ENCODE measurements at regions of chr11 and their contacts with region 1.

Region 1: GRCh38 chr11:9314291-9315036 is at the start of gene TMEM41B:
- DNase-seq: peak; percentile 98
- H3K4me3 Mint-ChIP-seq: peak within 1 kb of the TSS; percentile 99
- H3K27ac Mint-ChIP-seq: peak within 1 kb of the TSS; percentile 97
- H3K4me1 Mint-ChIP-seq: peaks cover 37% of the 10 kb centered on the region
- H3K27me3 Mint-ChIP-seq: peaks cover 11% of the 10 kb centered on the region
- total RNA-seq, gene TMEM41B: 26.1 and 28.8 TPM in 2 replicates

Region 2: GRCh38 chr11:8688414-8689362 is 625.8 kb before region 1 on chr11:
- intact Hi-C with region 1: loop called (anchors 1 kb)
- DNase-seq: peak; percentile 82
- H3K4me3 Mint-ChIP-seq: peak overlapping the region; percentile 94
- H3K27ac Mint-ChIP-seq: peak overlapping the region; percentile 91
- H3K4me1 Mint-ChIP-seq: peaks cover 60% of the 10 kb centered on the region
- H3K27me3 Mint-ChIP-seq: no peaks in the 10 kb centered on the region

Region 3: GRCh38 chr11:9170450-9170849 is 144.0 kb before region 1 on chr11:
- intact Hi-C with region 1: loop called (anchors 1 kb)
- DNase-seq: no peak
- H3K4me3 Mint-ChIP-seq: no peak overlapping the region
- H3K27ac Mint-ChIP-seq: no peak overlapping the region
- H3K4me1 Mint-ChIP-seq: peaks cover 10% of the 10 kb centered on the region
- H3K27me3 Mint-ChIP-seq: no peaks in the 10 kb centered on the region

Region 4: DNA sequence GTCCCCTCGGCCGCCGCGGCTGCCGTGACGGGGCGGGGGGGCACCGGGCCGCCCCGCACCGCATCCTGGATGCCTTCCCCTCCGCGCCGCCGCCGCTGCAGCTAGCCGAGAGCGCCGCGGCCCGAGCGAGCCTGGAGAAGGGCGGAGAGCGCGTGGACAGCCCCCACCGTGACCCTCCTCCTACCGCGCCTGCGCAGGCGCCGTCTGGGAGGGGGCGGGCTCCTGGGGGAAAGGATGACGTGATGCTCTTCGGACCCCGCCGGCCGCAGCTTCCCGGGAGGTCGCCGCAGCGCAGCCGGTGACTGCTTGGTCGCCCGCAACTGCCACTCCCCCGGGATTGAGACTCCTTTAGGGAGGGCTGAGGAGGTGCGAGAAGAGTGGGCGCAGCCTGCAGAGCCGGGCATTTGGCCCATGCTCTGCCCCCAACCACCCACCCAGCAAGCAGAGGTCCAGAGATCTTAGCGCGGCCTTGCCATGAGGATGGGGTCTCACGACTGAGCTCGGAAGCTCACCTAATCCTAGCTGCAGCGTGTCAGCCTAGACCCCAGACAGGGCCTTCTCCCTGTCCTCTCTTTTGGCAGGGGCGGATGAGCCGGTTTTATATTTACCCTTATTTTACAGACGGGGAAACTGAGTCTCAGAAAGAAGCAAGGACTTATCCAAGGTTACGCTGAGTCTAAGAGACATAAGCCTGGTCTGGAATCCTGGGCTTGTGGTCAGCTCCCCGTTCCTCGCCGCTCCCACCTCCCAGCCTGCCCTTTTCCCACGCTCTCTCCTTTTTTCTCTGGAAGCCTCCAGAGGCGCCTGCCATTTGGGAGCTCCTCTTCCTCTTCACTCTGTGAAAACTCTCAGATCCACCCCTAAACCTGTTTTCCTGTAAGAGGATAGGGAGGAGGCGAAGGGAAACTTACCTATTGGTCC is 49.0 kb before region 1 on chr11 and contains the start of gene DENND5A:
- intact Hi-C with region 1: loop called (anchors 1 kb)
- DNase-seq: peak; percentile 36
- H3K4me3 Mint-ChIP-seq: peak within 1 kb of the TSS; percentile 82
- H3K27ac Mint-ChIP-seq: peak within 1 kb of the TSS; percentile 80
- H3K4me1 Mint-ChIP-seq: peaks cover 33% of the 10 kb centered on the region
- H3K27me3 Mint-ChIP-seq: peaks cover 35% of the 10 kb centered on the region
- total RNA-seq, gene DENND5A: 45.6 and 47.6 TPM in 2 replicates

Region 5: GRCh38 chr11:9363954-9364912 is 49.8 kb after region 1 on chr11:
- intact Hi-C with region 1: loop called (anchors 1 kb)
- DNase-seq: peak; percentile 76
- H3K4me3 Mint-ChIP-seq: peak overlapping the region; percentile 82
- H3K27ac Mint-ChIP-seq: peak overlapping the region; percentile 90
- H3K4me1 Mint-ChIP-seq: peaks cover 28% of the 10 kb centered on the region
- H3K27me3 Mint-ChIP-seq: peaks cover 5% of the 10 kb centered on the region

Region 6: GRCh38 chr11:9613118-9613829 is 298.8 kb after region 1 on chr11:
- intact Hi-C with region 1: loop called (anchors 1 kb)
- DNase-seq: peak; percentile 80
- H3K4me3 Mint-ChIP-seq: peak overlapping the region; percentile 89
- H3K27ac Mint-ChIP-seq: peak overlapping the region; percentile 99
- H3K4me1 Mint-ChIP-seq: peaks cover 44% of the 10 kb centered on the region
- H3K27me3 Mint-ChIP-seq: peaks cover 1% of the 10 kb centered on the region

Measured in activated T-helper 1 cell treated with anti-CD3 and anti-CD28 coated beads, Interleukin-12 subunit alpha, Interleukin-12 subunit beta, Interleukin-2, Interleukin-4 antibody, amounts not matched to agents 30 ng/mL and 10 ng/mL and 1 ng/mL, durations not matched to agents 14 hours and 24 hours and 36 hours (primary cell).